ENCODE measurements at regions of chr3 and their contacts with region 1.

Region 1: DNA sequence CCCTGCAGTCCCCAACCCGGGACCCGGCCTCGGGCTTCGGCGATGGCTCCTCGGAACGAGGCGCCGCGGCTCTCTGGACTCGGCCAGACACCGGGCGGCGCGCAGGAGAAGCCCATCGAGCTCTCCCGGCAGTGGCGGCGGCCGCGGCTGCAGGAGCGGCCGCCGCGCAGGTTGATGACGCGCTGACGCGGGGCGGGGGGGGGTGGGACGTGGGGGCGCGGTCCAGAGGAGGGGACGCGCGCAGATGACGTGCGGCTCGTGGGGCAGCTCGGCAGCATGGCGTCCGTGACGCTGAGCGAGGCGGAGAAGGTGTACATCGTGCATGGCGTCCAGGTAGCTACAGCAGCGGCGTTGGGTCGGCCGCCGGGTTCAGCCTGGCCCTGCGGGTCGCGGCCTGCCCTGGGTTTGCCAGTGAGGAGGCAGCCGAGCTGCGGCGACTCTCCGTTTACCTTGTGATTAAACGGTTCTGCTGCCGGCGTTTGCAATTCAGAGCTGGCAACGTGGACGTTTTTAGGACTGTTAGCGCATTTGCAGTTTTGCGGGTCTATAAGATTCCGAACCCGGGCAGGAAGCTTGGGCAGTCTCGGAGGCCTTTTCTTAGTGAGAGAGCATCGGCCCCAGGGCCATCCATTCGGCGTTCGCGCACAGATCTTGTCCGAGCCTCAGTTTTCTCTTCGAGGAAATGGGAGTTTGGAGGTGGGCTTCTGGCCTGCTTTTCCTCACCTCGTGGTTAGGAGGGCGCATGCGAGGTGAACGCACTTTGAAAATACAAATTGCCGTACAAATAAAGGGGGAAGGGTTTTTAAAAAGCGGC is at the starts of genes EXOSC7 and ZDHHC3:
- DNase-seq: peak; percentile 15 to 80
- H3K4me3 ChIP-seq: peak within 1 kb of the TSS; percentile 63 to 99 (median 90)
- H3K27ac ChIP-seq: peak within 1 kb of the TSS; percentile 93
- H3K4me1 ChIP-seq: peaks cover 0 to 11% (median 4%) of the 10 kb centered on the region in 4 experiments; a peak in 5 of 7 replicates
- H3K27me3 ChIP-seq: no peaks in the 10 kb centered on the region
- CTCF ChIP-seq: no peak
- EP300 ChIP-seq: no peak
- POLR2A ChIP-seq: peak; percentile 89 to 98
- RAD21 ChIP-seq: no peak
- total RNA-seq, gene EXOSC7: 86.3 and 94.5 TPM in 2 replicates
- total RNA-seq, gene ZDHHC3: 67.4 and 77.4 TPM in 2 replicates

Region 2: DNA sequence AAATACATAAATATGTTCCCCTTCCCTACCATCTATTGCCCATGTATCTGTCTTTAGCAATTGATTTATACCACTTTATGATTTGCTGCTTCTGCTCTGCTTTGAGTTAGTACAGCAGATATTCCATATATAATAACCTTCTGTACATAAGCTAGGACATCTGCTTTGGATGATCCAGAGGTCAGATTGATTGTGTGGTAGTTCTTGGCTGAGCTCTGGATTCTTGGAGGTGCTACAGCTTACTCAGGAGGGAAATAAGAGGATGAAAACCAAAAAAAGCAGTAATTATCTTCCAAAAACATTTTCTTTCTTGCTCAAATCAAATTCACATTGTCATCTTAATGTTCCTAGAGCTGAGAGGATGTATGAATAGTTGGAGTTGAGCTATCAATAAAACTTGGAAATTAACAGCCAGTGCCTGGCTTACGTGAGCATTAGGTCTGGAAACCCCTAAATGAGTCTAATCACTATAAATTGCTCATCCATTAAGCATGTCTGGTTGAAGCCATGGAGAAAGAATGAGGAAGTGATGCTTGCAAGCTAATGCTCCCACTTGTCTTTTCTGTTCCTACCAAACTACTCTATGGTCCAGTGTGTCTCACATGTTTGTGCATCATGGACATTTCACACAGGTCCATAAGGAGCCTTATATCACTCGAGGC is 150.8 kb before region 1 on chr3:
- CTCF ChIA-PET with region 1: no interaction called
- POLR2A ChIA-PET with region 1: no interaction called
- DNase-seq: no peak
- H3K4me3 ChIP-seq: no peak overlapping the region
- H3K27ac ChIP-seq: no peak overlapping the region
- H3K4me1 ChIP-seq: no peaks in the 10 kb centered on the region
- H3K27me3 ChIP-seq: no peaks in the 10 kb centered on the region
- CTCF ChIP-seq: no peak
- EP300 ChIP-seq: no peak
- POLR2A ChIP-seq: no peak
- RAD21 ChIP-seq: no peak

Region 3: GRCh38 chr3:44960387-44961026 is 15.7 kb before region 1 on chr3:
- CTCF ChIA-PET with region 1: interaction called, 4 read pairs
- POLR2A ChIA-PET with region 1: interaction called, 34 read pairs
- DNase-seq: no peak
- H3K4me3 ChIP-seq: no peak overlapping the region
- H3K27ac ChIP-seq: no peak overlapping the region
- H3K4me1 ChIP-seq: no peaks in the 10 kb centered on the region
- H3K27me3 ChIP-seq: peaks cover 0 to 1% (median 0%) of the 10 kb centered on the region in 4 experiments; a peak in 1 of 7 replicates
- CTCF ChIP-seq: no peak
- EP300 ChIP-seq: no peak
- POLR2A ChIP-seq: no peak
- RAD21 ChIP-seq: no peak

Region 4: GRCh38 chr3:44992555-44993470 is 16.6 kb after region 1 on chr3:
- CTCF ChIA-PET with region 1: interaction called, 29 read pairs
- POLR2A ChIA-PET with region 1: interaction called, 48 read pairs
- DNase-seq: peak in 1 of 2 experiments; percentile 71
- H3K4me3 ChIP-seq: peak overlapping the region in 1 of 4 experiments; percentile 1; a peak in 1 of 8 replicates
- H3K27ac ChIP-seq: 0 out of 2 replicates have a peak overlapping the region, but pooled peaks have one; percentile 5
- H3K4me1 ChIP-seq: peaks cover 4 to 11% (median 7%) of the 10 kb centered on the region in 4 experiments
- H3K27me3 ChIP-seq: no peaks in the 10 kb centered on the region
- CTCF ChIP-seq: peak; percentile 65 to 95 (median 92)
- EP300 ChIP-seq: no peak
- POLR2A ChIP-seq: no peak
- RAD21 ChIP-seq: peak in 1 of 2 experiments; percentile 40; a peak in 3 of 4 replicates

Region 5: DNA sequence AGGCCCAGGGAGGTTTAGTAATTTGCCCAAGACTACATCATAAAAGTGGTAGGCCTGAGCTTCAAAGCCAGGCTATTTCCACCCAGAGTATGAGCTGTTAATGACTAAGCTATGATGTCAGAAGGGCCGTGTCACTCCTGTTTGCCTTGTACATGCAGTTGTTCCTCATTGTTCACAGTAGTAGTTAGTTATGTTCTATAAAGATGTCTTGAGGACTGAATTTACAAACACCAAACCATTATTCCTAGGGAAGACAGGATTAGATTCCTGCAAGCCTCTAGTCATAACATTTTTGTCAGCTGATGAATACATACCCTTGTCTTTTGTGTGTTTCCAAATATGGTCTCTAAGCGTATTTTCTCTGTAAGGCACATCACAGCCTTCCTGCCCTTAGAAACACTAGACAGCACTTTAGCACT is 391.3 kb after region 1 on chr3:
- CTCF ChIA-PET with region 1: no interaction called
- POLR2A ChIA-PET with region 1: no interaction called
- DNase-seq: no peak
- H3K4me3 ChIP-seq: no peak overlapping the region
- H3K27ac ChIP-seq: no peak overlapping the region
- H3K4me1 ChIP-seq: no peaks in the 10 kb centered on the region
- H3K27me3 ChIP-seq: no peaks in the 10 kb centered on the region
- CTCF ChIP-seq: no peak
- EP300 ChIP-seq: no peak
- POLR2A ChIP-seq: no peak
- RAD21 ChIP-seq: no peak

Measured in H1 (cell line).